CD8-positive, alpha-beta T cell (primary cell): ENCODE measurements at regions of chr17 and their contacts with region 1.

Region 1: DNA sequence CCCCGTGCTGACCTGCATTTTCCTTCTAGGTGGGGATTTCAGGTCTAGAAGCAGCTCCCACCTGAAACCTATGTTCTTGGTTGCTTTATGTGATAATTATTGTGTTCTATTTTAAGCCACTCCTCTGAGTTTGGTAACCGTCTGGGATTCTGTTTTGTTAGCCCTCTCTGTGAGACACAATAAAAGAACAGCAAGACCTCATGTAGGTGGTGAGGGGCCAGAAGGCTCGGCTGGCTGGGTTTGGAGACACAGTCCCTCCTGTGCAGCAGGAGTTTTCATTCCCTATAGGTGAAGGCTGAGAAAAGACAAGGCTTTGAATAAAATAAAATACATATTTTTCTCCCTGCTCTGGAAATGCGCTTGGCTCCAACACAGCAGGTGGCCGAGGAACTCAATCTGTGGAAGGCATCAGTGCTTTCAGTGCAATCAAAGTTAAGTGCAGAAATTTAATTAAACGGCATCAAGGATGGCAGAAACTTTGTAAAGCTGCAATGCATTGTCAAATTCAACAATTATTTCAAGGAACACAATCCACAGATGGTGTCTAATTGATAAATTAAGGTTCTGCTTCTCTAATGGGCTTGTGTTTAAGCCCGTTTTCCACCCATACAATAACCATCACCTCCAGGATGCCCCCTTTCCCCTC is 107.8 kb downstream of the MSI2 start:
- DNase-seq: no peak
- ATAC-seq: no peak
- H3K4me3 ChIP-seq: no peak overlapping the region
- H3K4me3 Mint-ChIP-seq: no peak overlapping the region
- H3K27ac ChIP-seq: no peak overlapping the region
- H3K27ac Mint-ChIP-seq: no peak overlapping the region
- H3K4me1 ChIP-seq: no peaks in the 10 kb centered on the region
- H3K4me1 Mint-ChIP-seq: peaks cover 34% of the 10 kb centered on the region
- H3K27me3 ChIP-seq: no peaks in the 10 kb centered on the region
- H3K27me3 Mint-ChIP-seq: no peaks in the 10 kb centered on the region
- CTCF ChIP-seq: no peak

Region 2: DNA sequence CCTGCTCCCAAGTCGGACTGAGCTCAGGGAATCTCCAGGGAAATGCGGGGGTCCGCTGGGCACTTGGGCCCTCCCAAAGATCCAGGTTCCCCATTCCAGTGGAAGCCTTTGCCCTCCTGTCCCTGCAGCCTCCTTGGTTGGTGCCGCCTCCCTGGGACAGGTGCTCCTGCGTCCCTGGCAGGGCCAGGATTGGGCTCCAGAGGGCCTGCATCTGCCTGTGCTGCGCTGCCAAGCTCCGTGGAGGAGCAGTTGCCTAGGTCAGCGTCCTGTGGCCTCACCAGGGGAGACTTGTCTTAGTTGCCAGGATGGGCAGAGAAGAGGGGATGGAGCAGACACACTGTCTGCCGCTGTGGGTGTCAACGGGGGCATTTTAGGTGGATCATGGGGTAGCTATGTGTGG is 40.7 kb before region 1 on chr17:
- CTCF ChIA-PET with region 1: no interaction called
- POLR2A ChIA-PET with region 1: no interaction called
- intact Hi-C with region 1: loop called in 1 of 2 experiments (anchors 1 kb)
- DNase-seq: no peak
- ATAC-seq: no peak
- H3K4me3 ChIP-seq: no peak overlapping the region
- H3K4me3 Mint-ChIP-seq: no peak overlapping the region
- H3K27ac ChIP-seq: no peak overlapping the region
- H3K27ac Mint-ChIP-seq: no peak overlapping the region
- H3K4me1 ChIP-seq: no peaks in the 10 kb centered on the region
- H3K4me1 Mint-ChIP-seq: peaks cover 33% of the 10 kb centered on the region
- H3K27me3 ChIP-seq: no peaks in the 10 kb centered on the region
- H3K27me3 Mint-ChIP-seq: no peaks in the 10 kb centered on the region
- CTCF ChIP-seq: no peak

Region 3: DNA sequence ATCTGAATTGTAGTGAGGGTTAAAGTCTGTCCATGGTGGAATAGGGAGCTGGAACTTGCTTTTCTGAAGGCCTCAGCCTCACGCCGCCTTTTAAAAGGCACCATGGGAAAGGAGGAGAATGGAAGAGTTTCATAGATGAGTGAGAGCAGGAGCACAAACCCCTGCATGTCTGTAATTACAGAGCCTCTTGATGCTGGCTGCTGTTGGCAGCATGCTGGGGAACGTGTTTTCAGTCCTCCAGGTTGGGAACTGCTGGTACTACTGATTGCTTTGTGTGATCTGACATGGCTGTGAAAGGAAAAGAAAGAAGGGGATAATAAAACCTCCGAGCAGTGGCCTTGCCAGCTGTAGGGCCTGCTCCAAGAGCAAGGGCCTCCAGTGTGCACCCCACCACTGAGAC is 702.3 kb after region 1 on chr17:
- CTCF ChIA-PET with region 1: no interaction called
- POLR2A ChIA-PET with region 1: no interaction called
- intact Hi-C with region 1: no loop called
- DNase-seq: no peak
- ATAC-seq: no peak
- H3K4me3 ChIP-seq: no peak overlapping the region
- H3K4me3 Mint-ChIP-seq: no peak overlapping the region
- H3K27ac ChIP-seq: no peak overlapping the region
- H3K27ac Mint-ChIP-seq: no peak overlapping the region
- H3K4me1 ChIP-seq: no peaks in the 10 kb centered on the region
- H3K4me1 Mint-ChIP-seq: no peaks in the 10 kb centered on the region
- H3K27me3 ChIP-seq: no peaks in the 10 kb centered on the region
- H3K27me3 Mint-ChIP-seq: peaks cover 18% of the 10 kb centered on the region
- CTCF ChIP-seq: no peak